PC-3 (cell line): ENCODE measurements at regions of chr1 and their contacts with region 1.

Region 1: GRCh38 chr1:206635080-206635977 is at the start of gene DYRK3:
- DNase-seq: peak; percentile 98
- ATAC-seq: peak; percentile 82
- H3K4me3 ChIP-seq: peak within 1 kb of the TSS; percentile 85
- H3K27ac ChIP-seq: peak within 1 kb of the TSS; percentile 54
- H3K4me1 ChIP-seq: peaks cover 21% of the 10 kb centered on the region
- H3K27me3 ChIP-seq: no peaks in the 10 kb centered on the region
- CTCF ChIP-seq: no peak
- total RNA-seq, gene DYRK3: 12.1 and 14.1 TPM in 2 replicates

Region 2: DNA sequence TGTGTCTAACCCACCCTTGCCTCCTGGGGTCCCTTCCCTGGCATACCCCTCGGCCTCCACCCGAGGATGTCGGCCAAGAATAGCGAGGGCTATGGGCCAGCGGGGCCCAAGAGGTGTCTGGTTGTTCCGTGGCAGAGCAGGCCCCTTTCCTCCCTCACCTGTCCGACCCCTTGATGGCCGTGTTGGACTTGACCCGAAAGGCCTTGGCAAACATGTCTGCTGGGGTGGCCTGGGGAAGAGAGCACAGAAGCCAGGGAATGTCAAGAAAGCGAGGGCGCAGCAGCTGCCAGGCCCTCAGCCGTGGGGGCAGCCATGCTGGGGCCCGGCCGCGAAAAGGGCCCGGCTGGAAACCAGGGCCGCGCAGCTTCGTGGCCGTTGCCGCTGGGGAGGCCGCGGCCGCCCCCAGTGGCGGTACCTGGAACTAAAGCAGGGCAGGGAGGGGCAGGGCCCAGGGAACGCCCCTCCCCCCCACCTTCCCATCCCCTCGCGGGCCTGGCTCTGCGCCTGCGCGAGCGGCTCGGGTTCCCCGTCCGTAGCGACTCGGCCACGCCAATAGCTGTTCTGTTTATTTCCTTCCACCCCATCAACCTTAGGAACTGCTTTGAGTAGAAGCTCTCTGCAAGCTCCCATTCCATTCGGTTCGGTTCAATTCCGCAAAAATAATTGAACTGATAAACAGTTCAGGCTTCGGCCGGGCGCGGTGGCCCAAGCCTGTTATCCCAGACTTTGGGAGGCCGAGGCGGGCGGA is 23.0 kb before region 1 on chr1 and contains the start of gene EIF2D:
- CTCF ChIA-PET with region 1: interaction called, 20 read pairs
- POLR2A ChIA-PET with region 1: interaction called, 11 read pairs
- intact Hi-C with region 1: loop called (anchors 2 kb)
- DNase-seq: peak; percentile 99
- ATAC-seq: peak; percentile 94
- H3K4me3 ChIP-seq: peak within 1 kb of the TSS; percentile 87
- H3K27ac ChIP-seq: peak within 1 kb of the TSS; percentile 53
- H3K4me1 ChIP-seq: peaks cover 7% of the 10 kb centered on the region
- H3K27me3 ChIP-seq: no peaks in the 10 kb centered on the region
- CTCF ChIP-seq: peak; percentile 98
- total RNA-seq, gene EIF2D: 107 and 110 TPM in 2 replicates

Region 3: GRCh38 chr1:206684478-206685333 is 49.4 kb after region 1 on chr1 and contains the start of gene MAPKAPK2:
- CTCF ChIA-PET with region 1: interaction called, 4 read pairs
- POLR2A ChIA-PET with region 1: no interaction called
- intact Hi-C with region 1: loop called (anchors 1 kb)
- DNase-seq: peak; percentile 76
- ATAC-seq: peak; percentile 69
- H3K4me3 ChIP-seq: peak within 1 kb of the TSS; percentile 85
- H3K27ac ChIP-seq: peak within 1 kb of the TSS; percentile 65
- H3K4me1 ChIP-seq: peaks cover 28% of the 10 kb centered on the region
- H3K27me3 ChIP-seq: peaks cover 13% of the 10 kb centered on the region
- CTCF ChIP-seq: no peak
- total RNA-seq, gene MAPKAPK2: 98.5 and 133 TPM in 2 replicates

Region 4: DNA sequence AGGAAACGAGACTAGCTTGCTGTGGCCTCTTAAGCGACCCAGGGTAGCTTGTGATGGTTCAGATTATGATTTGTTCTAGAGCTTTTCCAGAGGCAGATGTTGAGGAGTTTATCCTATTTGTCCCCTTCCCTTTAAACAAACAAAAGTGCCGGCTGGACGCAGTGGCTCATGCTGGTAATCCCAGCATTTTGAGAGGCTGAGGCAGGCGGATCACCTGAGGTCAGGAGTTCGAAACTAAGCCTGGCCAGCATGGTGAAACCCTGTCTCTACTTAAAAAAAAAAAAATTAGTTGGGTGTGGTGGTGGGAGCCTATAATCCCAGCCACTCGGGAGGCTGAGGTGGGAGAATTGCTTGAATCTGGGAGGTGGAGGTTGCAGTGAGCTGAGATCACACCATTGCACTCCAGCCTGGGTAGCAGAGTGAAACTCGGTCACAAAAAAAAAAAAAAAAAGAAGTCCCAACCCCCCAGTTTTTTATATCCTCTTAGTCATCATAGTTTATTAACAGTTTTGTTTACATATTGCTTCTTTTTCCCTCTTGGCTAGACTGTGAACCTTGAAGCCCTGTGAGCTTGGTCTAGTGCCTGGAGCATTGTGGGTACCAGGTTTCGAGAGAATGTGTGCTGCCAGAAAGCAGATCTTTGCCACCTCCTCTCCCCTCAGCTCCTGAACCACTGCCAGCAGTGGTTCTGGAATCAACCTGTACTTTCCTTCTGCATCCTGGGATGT is 79.2 kb after region 1 on chr1:
- CTCF ChIA-PET with region 1: interaction called, 10 read pairs
- POLR2A ChIA-PET with region 1: interaction called, 18 read pairs
- intact Hi-C with region 1: loop called (anchors 2 kb)
- DNase-seq: peak; percentile 99
- ATAC-seq: peak; percentile 76
- H3K4me3 ChIP-seq: peak overlapping the region; percentile 45
- H3K27ac ChIP-seq: peak overlapping the region; percentile 88
- H3K4me1 ChIP-seq: peaks cover 64% of the 10 kb centered on the region
- H3K27me3 ChIP-seq: no peaks in the 10 kb centered on the region
- CTCF ChIP-seq: no peak

Region 5: GRCh38 chr1:206725109-206725963 is 90.0 kb after region 1 on chr1:
- CTCF ChIA-PET with region 1: no interaction called
- POLR2A ChIA-PET with region 1: no interaction called
- intact Hi-C with region 1: loop called (anchors 2 kb)
- DNase-seq: peak; percentile 69
- ATAC-seq: peak; percentile 47
- H3K4me3 ChIP-seq: no peak overlapping the region
- H3K27ac ChIP-seq: no peak overlapping the region; the same call in 1 of the 2 replicates
- H3K4me1 ChIP-seq: peaks cover 29% of the 10 kb centered on the region
- H3K27me3 ChIP-seq: no peaks in the 10 kb centered on the region
- CTCF ChIP-seq: peak; percentile 89

Region 6: DNA sequence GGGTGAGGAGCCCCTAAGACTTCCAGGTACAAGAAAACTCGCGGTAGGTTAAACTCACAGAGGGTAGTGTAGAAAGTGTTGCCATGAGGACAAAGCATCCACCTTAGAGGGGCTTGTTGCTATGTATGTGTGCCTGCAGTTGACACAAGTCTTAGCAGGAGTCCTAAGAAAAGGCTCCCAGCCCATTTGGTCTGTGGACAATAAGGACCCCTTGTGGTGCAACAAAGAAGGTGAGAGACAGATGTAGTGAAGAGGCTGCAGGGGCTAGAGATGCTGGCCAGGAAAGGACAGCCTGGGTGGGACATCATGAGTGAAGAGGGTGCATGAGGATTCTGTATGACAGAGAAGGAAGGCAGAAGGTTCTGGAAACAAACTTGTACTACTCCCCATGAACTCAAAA is 173.3 kb after region 1 on chr1:
- CTCF ChIA-PET with region 1: interaction called, 4 read pairs
- POLR2A ChIA-PET with region 1: no interaction called
- intact Hi-C with region 1: loop called (anchors 2 kb)
- DNase-seq: peak; percentile 72
- ATAC-seq: peak; percentile 72
- H3K4me3 ChIP-seq: no peak overlapping the region
- H3K27ac ChIP-seq: no peak overlapping the region
- H3K4me1 ChIP-seq: peaks cover 8% of the 10 kb centered on the region; the same call in 1 of the 2 replicates
- H3K27me3 ChIP-seq: peaks cover 13% of the 10 kb centered on the region
- CTCF ChIP-seq: peak; percentile 75